GM12878 (cell line): ENCODE measurements at regions of chr22 and their contacts with region 1.

Region 1: GRCh38 chr22:39446295-39446721 is 10.5 kb upstream of the MGAT3 start:
- DNase-seq: peak; percentile 59
- ATAC-seq: peak; percentile 67
- H3K4me3 ChIP-seq: 0 out of 2 replicates have a peak overlapping the region, but pooled peaks have one; percentile 94
- H3K27ac ChIP-seq: peak overlapping the region; percentile 92
- H3K4me1 ChIP-seq: peaks cover 84% of the 10 kb centered on the region
- H3K27me3 ChIP-seq: no peaks in the 10 kb centered on the region
- CTCF ChIP-seq: peak in 2 of 3 experiments; percentile 13 to 43; a peak in 2 of 6 replicates
- EP300 ChIP-seq: no peak
- POLR2A ChIP-seq: no peak
- RAD21 ChIP-seq: no peak

Region 2: DNA sequence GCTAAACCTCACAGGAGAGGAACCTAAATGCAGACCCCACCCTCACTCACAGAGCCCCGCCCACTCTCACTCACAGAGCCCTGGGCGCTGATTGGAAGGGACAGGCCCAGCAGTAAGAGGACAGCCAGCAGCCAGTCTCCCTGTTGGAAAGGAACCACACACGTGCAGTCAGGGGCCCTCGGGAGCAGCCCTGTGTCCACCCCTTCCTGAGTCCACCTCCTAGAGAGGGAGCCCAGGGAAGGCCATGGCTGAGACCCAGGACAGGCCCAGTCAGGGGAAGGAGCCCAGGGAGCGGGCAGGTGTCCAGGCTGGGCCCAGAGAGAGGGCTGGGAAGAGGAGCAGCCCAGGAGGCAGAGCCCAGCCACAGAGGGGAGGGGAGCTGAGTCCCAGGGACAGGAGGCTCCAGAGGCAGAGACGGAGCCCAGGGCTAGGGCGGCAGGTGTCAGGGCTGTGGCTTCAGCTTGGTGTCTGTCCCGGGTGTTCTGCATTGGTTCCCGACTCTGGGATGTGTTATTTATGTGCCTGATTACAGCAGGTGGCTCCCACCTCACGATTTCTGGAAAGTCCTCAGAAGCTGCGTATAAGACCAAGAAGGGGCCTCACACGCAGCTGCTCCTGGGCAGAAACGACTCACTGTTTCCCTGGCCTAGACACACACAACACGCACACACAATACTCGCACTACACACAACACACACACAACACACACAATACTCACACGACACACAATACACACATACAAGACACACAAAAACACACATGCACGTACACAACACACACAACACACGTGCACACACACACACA is 358.2 kb before region 1 on chr22:
- CTCF ChIA-PET with region 1: no interaction called
- POLR2A ChIA-PET with region 1: no interaction called
- RAD21 ChIA-PET with region 1: no interaction called
- SMC1A ChIA-PET with region 1: no interaction called
- in situ Hi-C with region 1: no loop called
- intact Hi-C with region 1: no loop called
- DNase-seq: no peak
- ATAC-seq: no peak
- H3K4me3 ChIP-seq: no peak overlapping the region
- H3K27ac ChIP-seq: no peak overlapping the region
- H3K4me1 ChIP-seq: peaks cover 30% of the 10 kb centered on the region
- H3K27me3 ChIP-seq: no peaks in the 10 kb centered on the region
- CTCF ChIP-seq: no peak
- EP300 ChIP-seq: no peak
- POLR2A ChIP-seq: peak; percentile 53; the same call in 1 of the 2 replicates
- RAD21 ChIP-seq: no peak

Region 3: DNA sequence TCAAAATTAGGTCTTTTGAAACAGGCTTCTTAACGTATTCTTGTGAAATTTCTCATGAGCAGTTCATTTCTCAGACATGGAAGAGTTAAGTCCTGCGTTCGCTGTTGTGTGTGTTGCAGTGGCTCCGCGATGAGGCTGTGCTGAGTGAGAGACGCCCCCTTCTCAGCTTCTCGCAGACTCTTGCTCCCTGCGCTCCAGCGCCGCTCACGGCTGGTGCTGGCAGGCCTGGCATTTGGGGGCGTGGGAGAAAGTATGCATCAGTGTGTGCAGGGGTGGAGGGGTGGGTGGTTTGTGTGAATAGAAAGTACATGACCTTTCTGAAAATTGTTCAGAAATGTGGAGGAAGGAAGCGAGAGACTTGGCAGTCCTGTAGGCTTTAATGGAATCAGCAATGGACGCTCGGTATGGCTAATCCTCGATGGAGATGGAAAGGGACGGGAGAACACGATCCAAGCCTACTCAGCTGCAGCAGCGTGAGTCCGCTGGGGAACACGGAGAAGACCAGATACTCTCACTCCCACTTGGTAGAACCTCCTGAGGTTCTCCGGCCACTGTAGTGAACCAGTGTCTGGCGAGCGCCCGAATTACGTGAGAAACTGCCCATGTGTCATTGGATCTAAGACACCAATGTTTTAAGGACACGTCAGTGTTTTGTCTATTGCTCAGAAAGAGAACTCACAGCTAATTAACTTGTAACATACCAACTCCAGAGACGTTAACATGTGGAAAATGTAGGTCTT is 40.8 kb before region 1 on chr22:
- CTCF ChIA-PET with region 1: interaction called, 22 read pairs
- POLR2A ChIA-PET with region 1: interaction called, 3 read pairs
- RAD21 ChIA-PET with region 1: interaction called, 13 read pairs
- SMC1A ChIA-PET with region 1: no interaction called
- in situ Hi-C with region 1: no loop called
- intact Hi-C with region 1: no loop called
- DNase-seq: no peak
- ATAC-seq: no peak
- H3K4me3 ChIP-seq: no peak overlapping the region
- H3K27ac ChIP-seq: no peak overlapping the region
- H3K4me1 ChIP-seq: peaks cover 3% of the 10 kb centered on the region
- H3K27me3 ChIP-seq: no peaks in the 10 kb centered on the region
- CTCF ChIP-seq: no peak
- EP300 ChIP-seq: no peak
- POLR2A ChIP-seq: no peak
- RAD21 ChIP-seq: no peak

Region 4: GRCh38 chr22:39462443-39463221 is 16.3 kb after region 1 on chr22:
- CTCF ChIA-PET with region 1: interaction called, 18 read pairs
- POLR2A ChIA-PET with region 1: interaction called, 28 read pairs
- RAD21 ChIA-PET with region 1: interaction called, 57 read pairs
- SMC1A ChIA-PET with region 1: interaction called, 50 read pairs
- in situ Hi-C with region 1: no loop called
- intact Hi-C with region 1: no loop called
- DNase-seq: peak; percentile 62
- ATAC-seq: peak; percentile 32
- H3K4me3 ChIP-seq: no peak overlapping the region; the same call in 1 of the 2 replicates
- H3K27ac ChIP-seq: peak overlapping the region; percentile 70
- H3K4me1 ChIP-seq: peaks cover 61% of the 10 kb centered on the region
- H3K27me3 ChIP-seq: no peaks in the 10 kb centered on the region
- CTCF ChIP-seq: peak in 2 of 3 experiments; percentile 7 to 46; a peak in 3 of 6 replicates
- EP300 ChIP-seq: no peak; a peak in 1 of 4 replicates
- POLR2A ChIP-seq: no peak
- RAD21 ChIP-seq: peak; percentile 23; the same call in 1 of the 2 replicates

Region 5: GRCh38 chr22:39471381-39472141 is 25.3 kb after region 1 on chr22:
- CTCF ChIA-PET with region 1: interaction called, 4 read pairs
- POLR2A ChIA-PET with region 1: interaction called, 38 read pairs
- RAD21 ChIA-PET with region 1: interaction called, 27 read pairs
- SMC1A ChIA-PET with region 1: interaction called, 16 read pairs
- in situ Hi-C with region 1: no loop called
- intact Hi-C with region 1: no loop called
- DNase-seq: peak; percentile 83
- ATAC-seq: peak; percentile 89
- H3K4me3 ChIP-seq: peak overlapping the region; percentile 50; the same call in 1 of the 2 replicates
- H3K27ac ChIP-seq: peak overlapping the region; percentile 76
- H3K4me1 ChIP-seq: peaks cover 47% of the 10 kb centered on the region
- H3K27me3 ChIP-seq: no peaks in the 10 kb centered on the region
- CTCF ChIP-seq: no peak
- EP300 ChIP-seq: no peak
- POLR2A ChIP-seq: no peak
- RAD21 ChIP-seq: no peak